HEK293 (cell line): ENCODE measurements at regions of chr1 and their contacts with region 1.

Region 1: DNA sequence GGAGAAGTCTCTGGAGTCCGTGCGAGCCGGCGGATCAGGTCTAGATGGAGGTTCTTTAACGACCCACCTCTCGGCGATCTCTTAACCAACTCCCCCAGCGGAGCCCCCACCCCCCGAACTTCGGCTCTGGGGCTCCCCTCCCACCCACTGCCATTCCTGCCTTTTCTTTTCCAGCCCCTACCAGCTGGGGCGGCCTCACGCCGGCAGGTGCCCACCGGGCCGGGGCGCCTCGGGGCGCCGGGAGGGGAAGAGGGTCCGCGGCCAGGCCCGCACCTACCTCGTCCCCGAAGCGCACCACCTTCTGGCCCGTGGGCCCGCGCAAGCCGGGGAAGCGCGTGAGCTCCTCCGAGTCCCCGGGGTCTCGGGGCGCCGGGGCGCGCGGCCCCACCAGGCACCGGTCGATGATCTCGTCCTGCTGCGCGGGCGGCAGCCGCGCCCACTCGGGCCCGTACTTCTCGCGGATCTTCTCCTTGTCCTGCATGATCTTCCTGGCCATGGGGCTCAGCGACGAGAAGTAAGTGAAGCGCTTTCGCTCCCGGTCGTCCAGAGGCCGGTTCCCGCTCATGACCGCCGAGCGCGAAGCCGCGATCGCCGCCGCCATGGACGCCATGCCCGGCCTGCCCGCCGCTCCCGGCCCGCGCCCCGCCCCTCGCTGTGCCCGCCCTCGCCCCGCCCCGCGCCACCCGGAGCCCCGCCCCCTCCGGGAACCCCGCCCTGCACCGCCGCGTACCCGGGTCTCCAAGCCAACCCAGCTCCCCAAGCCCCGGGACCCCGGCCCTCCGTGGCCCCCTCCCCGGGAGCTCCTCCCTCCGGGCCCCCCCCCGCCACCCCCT is at the start of gene C1orf198:
- H3K4me3 ChIP-seq: peak within 1 kb of the TSS; percentile 90
- H3K27ac ChIP-seq: peak within 1 kb of the TSS; percentile 70; the same call in 1 of the 2 replicates
- H3K4me1 ChIP-seq: peaks cover 9% of the 10 kb centered on the region
- CTCF ChIP-seq: peak; percentile 29; the same call in 1 of the 2 replicates

Region 2: GRCh38 chr1:230375780-230376179 is 492.3 kb before region 1 on chr1:
- CTCF ChIA-PET with region 1: no interaction called
- POLR2A ChIA-PET with region 1: no interaction called
- H3K4me3 ChIP-seq: no peak overlapping the region
- H3K27ac ChIP-seq: no peak overlapping the region
- H3K4me1 ChIP-seq: no peaks in the 10 kb centered on the region
- CTCF ChIP-seq: no peak

Region 3: DNA sequence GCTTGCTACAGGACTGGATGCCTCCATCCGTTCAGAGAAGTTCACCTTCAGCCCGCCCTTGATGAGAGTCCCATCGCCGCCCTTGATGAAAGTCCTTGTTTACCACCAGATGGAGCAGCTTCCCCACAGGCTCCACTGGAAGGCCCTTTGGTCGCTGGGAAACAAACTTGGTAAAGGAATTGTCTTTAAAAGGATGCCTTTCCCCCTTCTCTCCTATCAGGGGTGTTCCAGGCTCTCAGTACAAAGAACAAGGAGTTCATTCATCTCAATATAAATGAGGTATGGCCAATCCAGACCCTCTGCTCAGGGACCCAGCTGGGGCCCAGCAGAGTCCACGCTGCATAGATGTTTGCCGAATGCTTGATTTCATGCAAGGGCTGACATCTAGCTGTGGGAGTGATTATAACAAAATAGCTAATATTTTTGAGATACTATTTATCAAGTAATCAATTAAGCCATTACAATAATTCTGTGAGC is 70.1 kb before region 1 on chr1:
- CTCF ChIA-PET with region 1: interaction called, 12 read pairs
- POLR2A ChIA-PET with region 1: no interaction called
- H3K4me3 ChIP-seq: no peak overlapping the region
- H3K27ac ChIP-seq: no peak overlapping the region
- H3K4me1 ChIP-seq: no peaks in the 10 kb centered on the region
- CTCF ChIP-seq: peak; percentile 87

Region 4: DNA sequence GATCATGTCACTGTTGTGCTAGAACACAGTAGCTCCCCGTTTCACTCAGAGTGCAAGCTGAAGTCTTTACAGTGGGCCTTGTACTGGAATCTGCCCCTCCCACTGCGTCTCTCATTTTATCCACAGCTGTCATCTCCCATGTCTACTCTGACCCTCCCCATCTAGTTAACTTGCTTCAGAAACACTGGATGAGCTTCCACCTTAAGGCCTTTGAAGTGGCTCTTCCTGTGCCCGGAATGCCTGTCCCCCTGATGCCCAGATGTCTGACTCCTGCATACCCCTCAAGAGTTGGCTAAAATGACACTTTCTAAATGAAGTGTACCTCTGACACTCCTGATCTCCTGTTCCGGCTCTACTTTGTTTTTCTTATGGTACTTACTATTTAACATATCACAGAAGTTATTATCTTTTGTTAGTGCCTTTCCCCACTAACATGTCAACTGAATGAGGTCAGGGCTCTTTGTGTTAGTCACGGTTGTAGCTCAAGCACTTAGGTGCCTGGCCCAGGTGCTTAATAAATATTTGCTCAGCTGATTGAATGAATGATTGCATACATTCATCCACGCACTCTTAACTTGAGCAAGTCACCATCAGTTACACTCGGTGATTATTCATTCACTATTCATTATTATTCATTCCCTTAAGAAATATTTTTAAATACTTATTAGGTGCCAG is 124.1 kb after region 1 on chr1:
- CTCF ChIA-PET with region 1: no interaction called
- POLR2A ChIA-PET with region 1: no interaction called
- H3K4me3 ChIP-seq: no peak overlapping the region
- H3K27ac ChIP-seq: no peak overlapping the region
- H3K4me1 ChIP-seq: peaks cover 5% of the 10 kb centered on the region; the same call in 1 of the 2 replicates
- CTCF ChIP-seq: no peak